Activated CD4-positive, alpha-beta T cell treated with anti-CD3 and anti-CD28 coated beads for 36 hours (primary cell): ENCODE measurements at regions of chr1 and their contacts with region 1.

Region 1: GRCh38 chr1:21355956-21356355 is 65.7 kb upstream of the ECE1 start:
- DNase-seq: peak; percentile 76
- ATAC-seq: peak; percentile 97
- H3K4me3 Mint-ChIP-seq: no peak overlapping the region
- H3K27ac Mint-ChIP-seq: peak overlapping the region; percentile 29
- H3K4me1 Mint-ChIP-seq: peaks cover 11% of the 10 kb centered on the region
- H3K27me3 Mint-ChIP-seq: no peaks in the 10 kb centered on the region

Region 2: DNA sequence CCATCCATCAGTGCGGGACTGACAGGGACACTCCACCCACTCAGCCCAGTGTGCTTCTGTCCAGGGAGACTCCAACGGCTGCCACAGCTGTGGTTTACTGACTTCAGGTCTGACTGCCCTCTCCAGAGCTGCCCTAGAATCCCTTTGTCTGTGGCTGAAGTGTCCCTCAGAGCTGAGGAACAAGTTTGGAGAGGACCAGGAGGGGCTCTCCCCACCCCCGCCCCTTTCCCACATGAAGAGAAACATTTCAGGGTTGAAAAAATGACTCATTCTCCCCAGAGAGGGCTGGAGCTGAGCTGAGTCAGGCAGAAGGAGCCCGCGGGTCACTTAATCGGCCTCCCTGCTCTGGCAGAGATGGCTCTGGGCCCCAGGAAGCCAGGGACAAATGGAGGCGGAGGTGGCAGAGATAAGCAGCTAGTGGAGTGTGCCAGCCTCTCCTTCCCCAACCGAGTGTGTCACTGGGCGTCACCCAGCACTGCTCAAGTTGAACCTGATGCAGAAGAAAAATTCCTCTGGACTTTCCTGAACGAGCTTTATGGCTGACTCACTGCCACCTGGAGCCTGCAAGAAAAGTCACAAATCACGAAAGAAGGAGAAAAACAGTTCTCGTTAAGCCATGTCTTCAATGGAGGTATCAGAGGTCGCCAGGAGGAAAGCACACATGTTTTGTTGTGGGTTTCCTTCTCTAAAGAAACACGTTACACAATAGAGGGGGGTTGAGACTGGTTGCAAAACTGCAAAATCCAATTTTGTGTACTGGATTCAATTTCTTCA is 31.4 kb before region 1 on chr1:
- CTCF ChIA-PET with region 1: no interaction called
- POLR2A ChIA-PET with region 1: no interaction called
- intact Hi-C with region 1: loop called in 1 of 2 experiments (anchors 1 kb)
- DNase-seq: peak; percentile 90
- ATAC-seq: peak; percentile 87
- H3K4me3 Mint-ChIP-seq: peak overlapping the region; percentile 57
- H3K27ac Mint-ChIP-seq: peak overlapping the region; percentile 84
- H3K4me1 Mint-ChIP-seq: peaks cover 81% of the 10 kb centered on the region
- H3K27me3 Mint-ChIP-seq: no peaks in the 10 kb centered on the region